ENCODE measurements at regions of chr12 and their contacts with region 1.

Region 1: GRCh38 chr12:122051231-122051876 is 27.2 kb upstream of the MLXIP start:
- DNase-seq: no peak
- ATAC-seq: 0 out of 6 replicates have a peak, but pooled peaks of 1 of the 2 experiments have one; percentile 6
- H3K4me3 ChIP-seq: no peak overlapping the region
- H3K27ac ChIP-seq: peak overlapping the region; percentile 10 to 59; a peak in 3 of 6 replicates
- H3K4me1 ChIP-seq: peaks cover 24% of the 10 kb centered on the region
- CTCF ChIP-seq: no peak
- EP300 ChIP-seq: no peak
- POLR2A ChIP-seq: no peak
- RAD21 ChIP-seq: no peak

Region 2: GRCh38 chr12:121190523-121191031 is 860.8 kb before region 1 on chr12:
- CTCF ChIA-PET with region 1: no interaction called
- POLR2A ChIA-PET with region 1: no interaction called
- DNase-seq: no peak
- ATAC-seq: peak in 1 of 2 experiments; percentile 52; a peak in 2 of 6 replicates
- H3K4me3 ChIP-seq: no peak overlapping the region
- H3K27ac ChIP-seq: no peak overlapping the region
- H3K4me1 ChIP-seq: no peaks in the 10 kb centered on the region
- CTCF ChIP-seq: no peak
- EP300 ChIP-seq: no peak
- POLR2A ChIP-seq: no peak
- RAD21 ChIP-seq: no peak

Region 3: GRCh38 chr12:122013791-122014590 is 37.4 kb before region 1 on chr12:
- CTCF ChIA-PET with region 1: no interaction called
- POLR2A ChIA-PET with region 1: no interaction called
- DNase-seq: no peak
- ATAC-seq: no peak
- H3K4me3 ChIP-seq: no peak overlapping the region
- H3K27ac ChIP-seq: no peak overlapping the region
- H3K4me1 ChIP-seq: no peaks in the 10 kb centered on the region
- CTCF ChIP-seq: no peak
- EP300 ChIP-seq: no peak
- POLR2A ChIP-seq: no peak
- RAD21 ChIP-seq: no peak

Region 4: GRCh38 chr12:122031342-122032216 is 19.8 kb before region 1 on chr12:
- CTCF ChIA-PET with region 1: interaction called, 15 read pairs
- POLR2A ChIA-PET with region 1: no interaction called
- DNase-seq: peak; percentile 51 to 79
- ATAC-seq: peak; percentile 84 to 95
- H3K4me3 ChIP-seq: no peak overlapping the region
- H3K27ac ChIP-seq: peak overlapping the region in 1 of 2 experiments; percentile 69; a peak in 3 of 6 replicates
- H3K4me1 ChIP-seq: no peaks in the 10 kb centered on the region
- CTCF ChIP-seq: peak; percentile 66
- EP300 ChIP-seq: no peak
- POLR2A ChIP-seq: no peak
- RAD21 ChIP-seq: peak; percentile 64 to 70

Region 5: DNA sequence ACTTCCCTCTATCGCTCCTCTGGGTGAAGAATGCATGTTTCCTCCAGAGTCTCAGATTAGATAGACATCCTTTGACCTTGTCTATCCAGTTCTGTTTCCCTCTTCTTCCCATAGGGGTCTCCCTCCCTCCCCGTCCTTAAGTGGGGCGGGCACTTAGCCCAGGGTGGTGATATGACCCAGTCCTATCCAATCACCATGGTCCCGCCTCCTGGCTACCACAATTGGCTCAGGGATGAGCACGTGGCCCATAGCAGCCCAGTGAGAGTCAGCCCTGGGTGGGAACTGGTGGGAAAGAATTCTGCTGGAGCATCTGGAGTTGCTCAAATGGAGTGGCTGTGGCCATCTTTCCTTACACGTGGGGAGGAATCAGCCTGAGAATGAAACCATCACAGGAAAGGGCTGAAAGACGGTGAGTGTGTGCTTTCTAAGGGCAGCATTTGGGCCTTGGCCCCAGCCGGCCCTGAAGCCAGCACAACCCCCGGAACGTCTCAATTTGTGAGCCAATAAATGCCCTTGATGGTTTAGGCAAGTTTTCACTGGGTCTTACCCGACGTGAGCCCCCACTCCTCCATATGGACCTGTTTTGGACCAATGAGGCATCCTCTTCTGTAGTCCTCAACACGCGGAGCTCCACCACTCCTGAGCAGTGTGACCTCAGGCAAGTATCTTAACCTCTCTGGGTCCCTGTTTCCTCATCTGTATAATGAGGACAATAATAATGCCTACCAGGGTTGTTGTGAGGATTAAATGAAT is 12.8 kb after region 1 on chr12:
- CTCF ChIA-PET with region 1: interaction called, 62 read pairs
- POLR2A ChIA-PET with region 1: no interaction called
- DNase-seq: peak; percentile 89 to 98
- ATAC-seq: peak; percentile 69 to 96
- H3K4me3 ChIP-seq: no peak overlapping the region
- H3K27ac ChIP-seq: peak overlapping the region; percentile 84
- H3K4me1 ChIP-seq: peaks cover 37% of the 10 kb centered on the region
- CTCF ChIP-seq: peak; percentile 18; the same call in 1 of the 3 replicates
- EP300 ChIP-seq: no peak
- POLR2A ChIP-seq: no peak
- RAD21 ChIP-seq: peak in 1 of 2 experiments; percentile 40; a peak in 2 of 5 replicates

Region 6: DNA sequence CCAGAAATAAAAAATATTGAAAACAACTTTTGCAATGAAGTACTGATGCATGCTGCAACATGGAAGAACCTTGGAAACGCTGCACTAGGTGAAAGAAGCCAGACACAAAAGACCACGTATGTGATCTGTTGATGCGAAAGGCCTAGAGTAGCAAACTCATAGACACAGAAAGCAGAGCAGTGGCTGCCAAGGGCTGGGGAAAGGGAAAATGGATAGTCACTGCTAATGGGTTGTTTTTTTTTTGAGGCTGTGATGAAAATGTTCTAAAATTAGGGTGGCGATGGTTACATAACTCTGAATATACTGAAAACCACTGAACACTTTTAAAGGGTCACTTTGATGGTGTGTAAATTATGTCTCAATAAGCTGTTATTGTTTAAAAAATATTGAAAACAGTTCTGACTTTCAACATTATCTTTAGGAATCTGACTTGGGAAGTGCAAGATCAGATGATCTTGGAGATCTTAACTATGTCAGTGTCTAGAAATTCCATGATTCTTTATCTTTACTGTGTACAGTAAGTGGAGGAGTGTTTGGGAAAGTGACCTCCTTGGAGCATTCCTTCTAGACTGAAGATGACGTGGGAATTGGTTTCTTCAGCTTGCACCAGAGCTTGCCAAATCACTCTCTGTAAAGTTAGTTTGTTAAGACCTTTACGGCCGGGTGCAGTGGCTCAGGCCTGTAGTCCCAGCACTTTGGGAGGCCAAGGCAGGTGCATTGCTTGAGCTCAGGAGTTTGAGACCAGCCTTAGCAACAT is 39.6 kb after region 1 on chr12:
- CTCF ChIA-PET with region 1: interaction called, 25 read pairs
- POLR2A ChIA-PET with region 1: no interaction called
- DNase-seq: peak in 1 of 2 experiments; percentile 86
- ATAC-seq: peak; percentile 76
- H3K4me3 ChIP-seq: no peak overlapping the region
- H3K27ac ChIP-seq: peak overlapping the region; percentile 76
- H3K4me1 ChIP-seq: peaks cover 66% of the 10 kb centered on the region
- CTCF ChIP-seq: no peak
- EP300 ChIP-seq: peak; percentile 84 to 87; a peak in 4 of 5 replicates
- POLR2A ChIP-seq: no peak
- RAD21 ChIP-seq: no peak

Region 7: DNA sequence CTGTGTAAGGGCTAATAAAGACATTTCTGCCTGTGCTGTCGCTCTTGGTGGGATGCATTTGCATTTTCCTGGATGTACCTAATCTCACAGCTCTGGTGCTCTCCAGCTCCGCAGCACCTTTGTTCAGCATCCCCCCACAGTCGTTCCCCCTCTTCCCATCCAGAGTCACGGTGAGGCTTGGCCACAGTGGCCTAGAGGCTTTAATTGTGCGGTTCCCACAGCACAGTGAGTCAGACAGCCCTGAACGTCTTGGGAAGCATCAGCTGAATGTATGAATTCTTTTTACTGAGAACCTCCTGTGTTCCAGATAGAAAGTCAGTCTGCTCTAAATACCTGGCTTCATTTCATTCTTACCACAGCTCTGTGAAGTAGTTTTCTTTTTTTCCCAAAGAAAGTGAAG is 55.9 kb after region 1 on chr12:
- CTCF ChIA-PET with region 1: interaction called, 17 read pairs
- POLR2A ChIA-PET with region 1: no interaction called
- DNase-seq: no peak
- ATAC-seq: peak in 1 of 2 experiments; percentile 25; a peak in 2 of 6 replicates
- H3K4me3 ChIP-seq: no peak overlapping the region
- H3K27ac ChIP-seq: peak overlapping the region; percentile 31 to 56; a peak in 3 of 6 replicates
- H3K4me1 ChIP-seq: peaks cover 48% of the 10 kb centered on the region
- CTCF ChIP-seq: no peak
- EP300 ChIP-seq: no peak
- POLR2A ChIP-seq: no peak
- RAD21 ChIP-seq: no peak

Region 8: GRCh38 chr12:122244565-122245371 is 193.4 kb after region 1 on chr12:
- CTCF ChIA-PET with region 1: no interaction called
- POLR2A ChIA-PET with region 1: no interaction called
- DNase-seq: no peak
- ATAC-seq: no peak
- H3K4me3 ChIP-seq: no peak overlapping the region
- H3K27ac ChIP-seq: no peak overlapping the region
- H3K4me1 ChIP-seq: no peaks in the 10 kb centered on the region
- CTCF ChIP-seq: no peak
- EP300 ChIP-seq: no peak
- POLR2A ChIP-seq: no peak
- RAD21 ChIP-seq: no peak